ENCODE measurements at regions of chr10 and their contacts with region 1.

Region 1: DNA sequence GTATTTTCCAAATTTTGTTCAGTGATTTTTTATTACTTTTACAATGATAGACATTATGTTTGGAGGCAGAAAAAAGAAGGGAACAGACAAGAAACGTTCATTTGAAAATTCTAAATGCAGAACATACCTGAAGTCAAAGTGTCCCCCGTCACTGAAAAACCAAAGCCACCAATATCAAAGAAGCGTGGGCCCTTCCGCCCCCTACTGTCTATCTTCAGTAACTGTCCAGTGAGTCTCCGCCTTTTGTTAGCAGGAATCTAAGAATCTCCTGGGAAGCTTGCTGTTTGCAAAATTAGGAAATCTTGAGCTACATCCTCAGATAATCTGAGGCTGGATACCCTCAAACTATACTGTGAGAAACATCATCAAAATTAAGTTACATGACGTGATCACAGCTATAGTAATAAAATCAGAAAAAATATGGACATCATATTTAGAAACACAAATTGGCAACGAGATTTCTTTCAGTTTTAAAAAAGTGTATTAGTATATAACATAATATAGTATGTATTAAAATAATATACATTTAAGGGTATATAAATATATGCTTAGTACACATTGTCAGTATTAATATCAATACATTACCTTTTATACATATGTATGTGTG is 169.3 kb upstream of the AKR1E2 start:
- DNase-seq: no peak
- H3K4me3 ChIP-seq: no peak overlapping the region
- H3K27ac ChIP-seq: no peak overlapping the region
- H3K27me3 ChIP-seq: no peaks in the 10 kb centered on the region
- CTCF ChIP-seq: peak; percentile 94

Region 2: GRCh38 chr10:4333459-4333894 is 323.2 kb before region 1 on chr10:
- CTCF ChIA-PET with region 1: interaction called, 13 read pairs
- POLR2A ChIA-PET with region 1: no interaction called
- DNase-seq: no peak
- H3K4me3 ChIP-seq: no peak overlapping the region
- H3K27ac ChIP-seq: no peak overlapping the region
- H3K27me3 ChIP-seq: no peaks in the 10 kb centered on the region
- CTCF ChIP-seq: no peak

Region 3: GRCh38 chr10:4344511-4344994 is 312.1 kb before region 1 on chr10:
- CTCF ChIA-PET with region 1: interaction called, 10 read pairs
- POLR2A ChIA-PET with region 1: no interaction called
- DNase-seq: peak; percentile 98
- H3K4me3 ChIP-seq: no peak overlapping the region
- H3K27ac ChIP-seq: peak overlapping the region; percentile 96
- H3K27me3 ChIP-seq: no peaks in the 10 kb centered on the region
- CTCF ChIP-seq: peak; percentile 38; the same call in 1 of the 2 replicates

Region 4: GRCh38 chr10:4671451-4672145 is 14.9 kb after region 1 on chr10:
- CTCF ChIA-PET with region 1: interaction called, 14 read pairs
- POLR2A ChIA-PET with region 1: no interaction called
- DNase-seq: no peak
- H3K4me3 ChIP-seq: no peak overlapping the region; the same call in 1 of the 2 replicates
- H3K27ac ChIP-seq: peak overlapping the region; percentile 50
- H3K27me3 ChIP-seq: no peaks in the 10 kb centered on the region
- CTCF ChIP-seq: no peak